ENCODE measurements at regions of chr12 and their contacts with region 1.

Region 1: GRCh38 chr12:124767066-124767821 is 96.4 kb downstream of the SCARB1 start:
- DNase-seq: peak; percentile 86 to 91
- H3K4me3 ChIP-seq: no peak overlapping the region
- H3K27ac ChIP-seq: peak overlapping the region in 4 of 5 donors; percentile 58 to 80 (median 78)
- H3K4me1 ChIP-seq: peaks cover 17 to 51% (median 31%) of the 10 kb centered on the region in 4 donors
- H3K27me3 ChIP-seq: peaks cover 0 to 3% (median 0%) of the 10 kb centered on the region in 3 donors
- CTCF ChIP-seq: peak in 6 of 7 experiments; percentile 97 to 100 (median 100)
- EP300 ChIP-seq: no peak
- POLR2A ChIP-seq: no peak

Region 2: GRCh38 chr12:124036674-124037109 is 730.6 kb before region 1 on chr12:
- intact Hi-C with region 1: loop called (anchors 5 kb)
- DNase-seq: peak; percentile 50 to 79
- H3K4me3 ChIP-seq: no peak overlapping the region
- H3K27ac ChIP-seq: no peak overlapping the region
- H3K4me1 ChIP-seq: peaks cover 0 to 4% (median 0%) of the 10 kb centered on the region in 4 donors
- H3K27me3 ChIP-seq: no peaks in the 10 kb centered on the region
- CTCF ChIP-seq: peak in 5 of 7 experiments; percentile 70 to 95 (median 87)
- EP300 ChIP-seq: no peak
- POLR2A ChIP-seq: no peak

Region 3: GRCh38 chr12:124359671-124360581 is 407.3 kb before region 1 on chr12:
- intact Hi-C with region 1: loop called (anchors 10 kb)
- DNase-seq: peak; percentile 78 to 94
- H3K4me3 ChIP-seq: no peak overlapping the region
- H3K27ac ChIP-seq: peak overlapping the region; percentile 78 to 85 (median 82)
- H3K4me1 ChIP-seq: peaks cover 30 to 64% (median 55%) of the 10 kb centered on the region in 4 donors
- H3K27me3 ChIP-seq: no peaks in the 10 kb centered on the region
- CTCF ChIP-seq: no peak
- EP300 ChIP-seq: peak; percentile 40
- POLR2A ChIP-seq: no peak

Region 4: DNA sequence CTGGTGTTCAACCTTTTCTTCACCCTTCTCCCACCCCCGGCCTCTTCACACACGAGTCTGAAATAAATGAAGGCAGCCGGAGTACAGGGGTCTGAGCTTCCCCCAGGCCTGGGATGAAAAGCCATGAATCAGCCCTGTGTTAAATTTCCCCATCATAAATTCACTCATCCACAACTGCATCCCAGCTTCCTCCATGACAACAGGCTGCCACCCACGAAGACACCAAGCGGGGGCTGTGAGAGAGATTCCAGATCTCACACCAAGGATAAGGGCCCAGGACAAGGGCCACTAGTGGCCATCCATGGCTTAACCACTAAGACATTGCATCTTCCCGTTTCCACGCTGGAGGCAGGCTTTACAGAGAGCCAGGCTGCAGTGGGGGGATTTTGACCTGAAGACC is 105.9 kb before region 1 on chr12:
- intact Hi-C with region 1: loop called (anchors 10 kb)
- DNase-seq: no peak
- H3K4me3 ChIP-seq: no peak overlapping the region
- H3K27ac ChIP-seq: no peak overlapping the region
- H3K4me1 ChIP-seq: peaks cover 0 to 4% (median 1%) of the 10 kb centered on the region in 4 donors
- H3K27me3 ChIP-seq: no peaks in the 10 kb centered on the region
- CTCF ChIP-seq: no peak
- EP300 ChIP-seq: no peak
- POLR2A ChIP-seq: no peak

Region 5: DNA sequence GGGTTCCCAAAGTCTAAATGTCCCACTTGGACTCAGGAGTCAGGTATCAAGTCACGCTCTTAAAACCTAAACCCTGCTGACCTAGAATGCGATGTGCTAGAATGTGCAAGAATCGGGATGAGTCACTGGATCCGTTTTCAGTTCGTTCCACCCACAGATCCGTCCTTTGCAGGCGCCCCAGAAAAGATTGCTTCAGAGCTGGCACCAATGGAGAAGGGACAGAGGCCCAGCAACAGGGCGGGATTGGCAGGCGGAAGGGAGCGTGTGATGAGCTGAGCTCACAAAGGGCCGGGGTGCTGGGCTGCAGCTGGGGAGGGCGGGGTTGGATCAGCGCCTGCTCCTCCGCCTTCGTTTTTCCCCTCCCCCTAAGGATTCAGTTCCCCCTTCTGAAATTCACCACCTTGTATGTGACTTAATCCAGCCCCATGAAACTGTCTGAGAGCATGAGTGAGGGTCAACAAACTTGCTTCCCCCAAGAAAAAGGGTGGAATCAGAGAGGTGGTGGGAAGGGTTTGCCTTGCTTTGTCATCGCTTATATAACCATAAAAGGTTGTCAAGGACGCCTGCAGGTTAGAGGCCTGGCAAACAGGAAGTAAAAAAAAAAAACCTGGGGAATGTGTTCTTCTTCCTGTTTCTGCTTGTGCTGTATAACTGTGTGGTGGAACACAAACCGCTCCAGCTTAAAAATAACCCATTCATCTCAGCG is 150.0 kb after region 1 on chr12:
- intact Hi-C with region 1: no loop called
- DNase-seq: peak; percentile 96 to 99
- H3K4me3 ChIP-seq: peak overlapping the region; percentile 18 to 88 (median 31)
- H3K27ac ChIP-seq: peak overlapping the region; percentile 98 to 100 (median 100)
- H3K4me1 ChIP-seq: peaks cover 40 to 78% (median 70%) of the 10 kb centered on the region in 4 donors
- H3K27me3 ChIP-seq: no peaks in the 10 kb centered on the region
- CTCF ChIP-seq: no peak
- EP300 ChIP-seq: peak; percentile 79
- POLR2A ChIP-seq: no peak